Transverse colon (tissue), 4 donors: ENCODE measurements at regions of chr5 and their contacts with region 1.

Region 1: GRCh38 chr5:127030259-127031146 is at the start of gene MARCHF3:
- DNase-seq: peak; percentile 97
- H3K4me3 ChIP-seq: peak within 1 kb of the TSS; percentile 58 to 74 (median 64)
- H3K27ac ChIP-seq: peak within 1 kb of the TSS; percentile 88 to 95 (median 91)
- H3K4me1 ChIP-seq: peaks cover 0 to 38% (median 8%) of the 10 kb centered on the region in 4 donors
- H3K27me3 ChIP-seq: no peaks in the 10 kb centered on the region
- CTCF ChIP-seq: peak in 4 of 5 experiments; percentile 7 to 49 (median 26)
- EP300 ChIP-seq: no peak
- POLR2A ChIP-seq: peak; percentile 99
- total RNA-seq, gene MARCHF3: 20.3 to 29.6 (median 23.0) TPM

Region 2: GRCh38 chr5:126718246-126718868 is 312.1 kb before region 1 on chr5:
- in situ Hi-C with region 1: no loop called
- intact Hi-C with region 1: no loop called
- DNase-seq: no peak
- H3K4me3 ChIP-seq: no peak overlapping the region
- H3K27ac ChIP-seq: no peak overlapping the region
- H3K4me1 ChIP-seq: no peaks in the 10 kb centered on the region
- H3K27me3 ChIP-seq: no peaks in the 10 kb centered on the region
- CTCF ChIP-seq: no peak
- EP300 ChIP-seq: no peak
- POLR2A ChIP-seq: no peak

Region 3: GRCh38 chr5:126852091-126852571 is 178.4 kb before region 1 on chr5:
- in situ Hi-C with region 1: loop called in 1 of 4 experiments (anchors 25 kb)
- intact Hi-C with region 1: loop called (anchors 10 kb)
- DNase-seq: no peak
- H3K4me3 ChIP-seq: no peak overlapping the region
- H3K27ac ChIP-seq: peak overlapping the region; percentile 28 to 60 (median 32)
- H3K4me1 ChIP-seq: peaks cover 0 to 26% (median 7%) of the 10 kb centered on the region in 4 donors
- H3K27me3 ChIP-seq: no peaks in the 10 kb centered on the region
- CTCF ChIP-seq: no peak
- EP300 ChIP-seq: no peak
- POLR2A ChIP-seq: no peak

Region 4: GRCh38 chr5:126869005-126869451 is 161.5 kb before region 1 on chr5:
- in situ Hi-C with region 1: loop called in 1 of 4 experiments (anchors 25 kb)
- intact Hi-C with region 1: no loop called
- DNase-seq: no peak
- H3K4me3 ChIP-seq: no peak overlapping the region
- H3K27ac ChIP-seq: no peak overlapping the region
- H3K4me1 ChIP-seq: no peaks in the 10 kb centered on the region
- H3K27me3 ChIP-seq: no peaks in the 10 kb centered on the region
- CTCF ChIP-seq: no peak
- EP300 ChIP-seq: no peak
- POLR2A ChIP-seq: no peak

Region 5: DNA sequence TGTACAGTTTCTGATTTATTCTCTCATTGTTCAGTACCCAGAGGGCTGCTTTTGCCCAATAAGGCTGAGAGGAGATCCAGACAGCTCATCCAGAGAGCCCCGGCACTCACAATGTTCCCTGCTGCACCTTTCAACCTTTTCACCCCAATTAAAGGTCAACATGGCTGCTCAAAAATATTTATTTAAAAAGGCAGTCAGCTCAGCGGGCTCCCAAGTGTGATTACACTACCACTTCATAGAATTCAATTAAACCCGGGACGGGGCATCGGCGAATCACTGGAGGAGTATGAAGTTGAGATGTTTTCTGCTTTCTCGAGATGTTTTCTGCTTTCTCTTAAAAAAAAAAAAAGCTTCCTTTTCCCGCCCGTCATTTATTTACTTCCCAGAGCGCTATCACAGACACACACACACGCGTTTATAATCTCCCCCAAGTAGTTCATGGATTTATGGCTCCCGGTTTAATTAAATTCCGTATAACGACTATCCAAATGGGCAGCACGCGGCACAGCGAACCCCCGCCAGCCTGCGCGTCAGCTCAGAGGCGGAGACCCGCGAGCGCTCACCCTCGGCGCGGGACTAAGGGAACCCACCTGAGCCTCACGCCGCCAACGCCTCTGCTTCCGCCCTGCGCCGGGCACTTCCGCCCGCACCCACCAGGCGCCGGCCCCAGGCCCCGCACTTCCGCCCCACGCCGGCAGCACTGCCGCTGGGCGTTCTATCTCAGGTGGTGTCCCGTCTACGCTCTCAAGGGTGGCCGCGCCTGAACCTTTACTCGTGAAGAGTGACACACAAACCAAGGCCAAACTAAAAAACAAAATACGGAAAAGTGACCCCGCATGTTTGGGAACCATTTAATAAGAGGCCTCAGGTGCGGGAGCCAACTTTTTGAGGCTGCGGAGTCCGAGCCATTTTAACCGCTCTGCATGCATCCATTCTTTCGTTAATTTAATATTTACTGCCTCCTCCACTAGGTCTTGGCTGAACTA is 42.7 kb after region 1 on chr5 and contains the start of gene C5orf63:
- in situ Hi-C with region 1: no loop called
- intact Hi-C with region 1: no loop called
- DNase-seq: peak; percentile 74
- H3K4me3 ChIP-seq: peak within 1 kb of the TSS; percentile 26 to 61 (median 50)
- H3K27ac ChIP-seq: peak within 1 kb of the TSS; percentile 45 to 74 (median 62)
- H3K4me1 ChIP-seq: peaks cover 0 to 25% (median 15%) of the 10 kb centered on the region in 4 donors
- H3K27me3 ChIP-seq: no peaks in the 10 kb centered on the region
- CTCF ChIP-seq: peak; percentile 49 to 84 (median 54)
- EP300 ChIP-seq: no peak
- POLR2A ChIP-seq: peak; percentile 49
- total RNA-seq, gene C5orf63: 2.4 to 33.7 (median 12.2) TPM

Region 6: DNA sequence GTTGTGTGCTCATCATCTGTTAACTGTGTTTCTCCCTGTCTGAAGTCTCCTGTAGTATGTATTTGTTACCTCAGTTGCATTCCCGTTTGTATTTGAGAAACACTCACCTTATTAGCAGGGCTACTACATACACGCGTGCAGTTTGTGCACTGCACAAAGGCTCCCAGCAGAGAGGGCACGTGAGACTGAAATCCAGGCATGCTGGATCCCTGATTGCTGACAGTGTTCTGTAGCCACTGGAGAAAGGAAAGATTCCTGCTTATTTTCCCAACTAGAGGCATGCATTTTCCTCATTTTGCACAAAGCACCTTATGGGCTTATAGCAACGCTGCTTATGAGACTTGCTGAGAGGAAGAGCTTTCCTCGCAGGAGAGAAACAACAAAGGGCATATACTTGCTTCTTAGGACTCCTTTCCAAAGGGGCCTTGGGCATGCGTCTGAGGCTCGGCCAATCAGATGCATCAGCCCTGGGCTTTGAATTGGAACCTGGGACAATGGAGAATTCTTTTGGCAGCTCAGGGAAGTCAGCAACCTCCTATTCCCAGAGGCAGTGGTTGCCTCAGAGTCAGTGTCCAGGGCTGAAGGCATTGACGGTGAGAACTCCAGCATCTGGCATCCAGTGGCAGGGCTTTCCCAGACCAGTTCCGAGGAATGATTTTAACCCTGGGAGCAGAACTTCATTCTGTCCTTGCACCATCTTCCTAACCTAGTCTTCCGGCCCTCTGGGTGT is 250.2 kb after region 1 on chr5:
- in situ Hi-C with region 1: no loop called
- intact Hi-C with region 1: no loop called
- DNase-seq: no peak
- H3K4me3 ChIP-seq: no peak overlapping the region
- H3K27ac ChIP-seq: no peak overlapping the region
- H3K4me1 ChIP-seq: no peaks in the 10 kb centered on the region
- H3K27me3 ChIP-seq: no peaks in the 10 kb centered on the region
- CTCF ChIP-seq: no peak
- EP300 ChIP-seq: no peak
- POLR2A ChIP-seq: no peak